Transverse colon (tissue), 4 donors: ENCODE measurements at regions of chr6 and their contacts with region 1.

Region 1: DNA sequence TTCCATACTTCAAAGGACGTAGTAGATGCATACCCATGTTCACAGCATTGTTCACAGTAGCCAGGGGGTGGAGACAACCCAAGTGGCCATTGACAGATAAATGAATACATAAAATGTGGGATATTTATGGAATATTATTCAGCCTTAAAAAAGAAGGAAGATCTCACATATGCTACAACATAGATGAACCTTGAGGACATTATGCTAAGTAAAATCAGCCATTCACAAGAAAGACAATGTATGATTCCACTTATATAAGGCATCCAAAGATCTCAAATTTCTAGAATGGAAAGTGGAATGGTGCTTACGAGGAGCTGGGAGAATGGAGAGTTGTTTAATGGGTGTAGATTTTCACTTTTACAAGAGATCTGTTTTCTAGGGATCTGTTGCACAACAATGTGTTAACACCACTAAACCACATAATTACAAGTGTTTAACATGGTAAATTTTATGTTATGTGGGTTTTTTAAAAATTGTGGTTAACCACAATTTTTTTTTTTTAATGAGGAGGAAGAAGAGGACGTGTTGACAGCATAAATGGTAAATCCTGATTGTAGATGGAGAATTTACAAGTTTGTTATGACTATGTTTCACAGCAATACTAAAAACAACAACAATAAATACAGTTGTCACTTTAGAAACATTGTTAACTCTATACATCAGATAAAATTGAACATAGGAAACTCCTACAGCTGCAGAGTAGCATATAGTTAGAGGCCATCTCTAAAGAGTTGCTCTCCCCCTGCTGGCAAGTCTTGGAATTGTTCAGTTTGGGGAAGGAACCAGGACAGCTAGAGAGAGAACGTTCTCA is 41.6 kb downstream of the CCN2 start:
- DNase-seq: peak; percentile 89
- H3K4me3 ChIP-seq: no peak overlapping the region
- H3K27ac ChIP-seq: no peak overlapping the region
- H3K4me1 ChIP-seq: peaks cover 0 to 26% (median 4%) of the 10 kb centered on the region in 4 donors
- H3K27me3 ChIP-seq: peaks cover 9% of the 10 kb centered on the region
- CTCF ChIP-seq: peak; percentile 82 to 94 (median 89)
- EP300 ChIP-seq: no peak
- POLR2A ChIP-seq: no peak

Region 2: GRCh38 chr6:131683479-131683878 is 226.1 kb before region 1 on chr6:
- in situ Hi-C with region 1: loop called in 1 of 4 experiments (anchors 10 kb)
- intact Hi-C with region 1: no loop called
- DNase-seq: no peak
- H3K4me3 ChIP-seq: no peak overlapping the region
- H3K27ac ChIP-seq: no peak overlapping the region
- H3K4me1 ChIP-seq: no peaks in the 10 kb centered on the region
- H3K27me3 ChIP-seq: no peaks in the 10 kb centered on the region
- CTCF ChIP-seq: no peak
- EP300 ChIP-seq: no peak
- POLR2A ChIP-seq: no peak

Region 3: GRCh38 chr6:131694831-131695426 is 214.7 kb before region 1 on chr6:
- in situ Hi-C with region 1: loop called in 2 of 4 experiments (anchors 10 kb)
- intact Hi-C with region 1: no loop called
- DNase-seq: peak; percentile 33
- H3K4me3 ChIP-seq: no peak overlapping the region
- H3K27ac ChIP-seq: no peak overlapping the region
- H3K4me1 ChIP-seq: no peaks in the 10 kb centered on the region
- H3K27me3 ChIP-seq: no peaks in the 10 kb centered on the region
- CTCF ChIP-seq: peak; percentile 55 to 66 (median 66)
- EP300 ChIP-seq: no peak
- POLR2A ChIP-seq: no peak

Region 4: DNA sequence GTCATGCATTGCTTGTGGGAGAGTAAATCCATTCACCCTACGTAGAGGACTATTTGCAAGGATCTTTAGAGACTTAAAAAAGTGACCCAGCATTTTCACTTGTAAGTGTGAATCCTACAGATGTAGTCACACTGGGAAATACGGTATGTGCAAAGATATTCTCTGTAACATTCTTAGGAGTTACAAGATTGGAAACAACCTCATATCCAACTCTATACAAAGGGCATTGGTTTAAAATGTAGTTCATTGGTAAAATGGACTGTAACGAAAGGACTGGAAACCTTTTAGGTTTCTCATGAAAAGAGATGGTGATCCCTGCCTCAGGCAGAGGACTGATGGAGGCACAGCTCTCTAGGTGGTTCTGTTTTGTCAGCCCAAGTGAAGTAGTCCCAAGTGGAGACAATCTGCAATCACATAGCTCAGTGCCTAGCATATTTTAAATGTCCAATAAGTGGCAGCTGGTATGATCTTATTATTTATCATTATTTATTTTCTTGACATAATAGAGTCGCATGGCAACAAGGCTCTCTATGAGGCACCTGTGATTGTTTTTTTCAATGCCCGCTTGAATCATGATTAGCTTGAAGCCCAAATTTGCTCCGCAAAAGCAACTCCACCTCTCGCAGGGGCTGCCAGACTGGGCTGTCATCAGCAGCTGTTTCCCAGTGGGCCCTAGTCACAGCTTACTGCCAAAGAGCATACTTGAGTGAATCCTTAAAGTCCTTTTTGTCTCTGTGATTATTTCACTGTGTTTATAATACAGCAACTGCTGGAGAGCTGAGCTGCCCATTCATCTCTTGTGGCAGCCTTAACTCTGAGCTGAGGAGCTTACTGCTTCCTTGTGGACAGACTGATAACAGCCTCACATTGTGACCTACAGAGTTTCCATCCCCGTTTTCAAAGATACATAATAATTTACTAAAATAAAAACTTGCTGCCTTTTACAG is 121.6 kb before region 1 on chr6:
- in situ Hi-C with region 1: loop called in 2 of 4 experiments (anchors 10 kb)
- intact Hi-C with region 1: no loop called
- DNase-seq: no peak
- H3K4me3 ChIP-seq: no peak overlapping the region
- H3K27ac ChIP-seq: no peak overlapping the region
- H3K4me1 ChIP-seq: no peaks in the 10 kb centered on the region
- H3K27me3 ChIP-seq: no peaks in the 10 kb centered on the region
- CTCF ChIP-seq: peak in 1 of 5 experiments; percentile 4
- EP300 ChIP-seq: no peak
- POLR2A ChIP-seq: no peak

Region 5: DNA sequence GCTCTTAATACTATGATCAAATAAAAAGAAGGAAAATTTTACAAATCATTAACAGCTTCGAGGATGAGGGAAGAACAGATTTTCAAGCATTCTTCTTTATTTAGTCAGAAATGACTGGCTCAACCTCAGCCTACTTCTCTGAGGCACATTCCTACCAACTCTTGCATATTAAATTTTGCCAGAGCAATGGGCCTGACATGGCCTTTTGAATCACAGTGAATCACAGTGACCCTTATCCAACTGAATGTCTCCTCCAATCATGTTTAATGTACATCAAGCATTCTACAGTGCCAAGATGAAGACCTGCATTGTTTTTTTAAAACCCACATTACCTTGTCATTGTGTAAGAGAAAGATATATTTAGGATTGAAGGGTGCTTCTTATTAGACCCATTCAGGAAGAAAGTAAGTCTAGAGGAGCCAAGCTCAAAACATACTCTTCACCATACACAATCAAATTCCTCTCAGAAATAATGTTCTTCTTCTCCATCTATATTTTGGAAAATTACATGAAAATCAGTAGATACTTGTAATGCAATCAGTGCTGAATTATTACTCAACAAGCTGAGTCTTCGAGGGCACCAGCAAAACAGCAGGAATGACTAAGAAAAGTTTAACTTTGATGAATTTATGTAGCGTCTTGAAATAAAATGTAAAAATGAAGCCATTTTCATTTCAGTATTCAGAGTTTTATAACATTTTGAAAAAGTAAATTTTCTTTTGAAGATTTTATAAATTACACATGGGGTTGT is 535.8 kb after region 1 on chr6:
- in situ Hi-C with region 1: no loop called
- intact Hi-C with region 1: no loop called
- DNase-seq: no peak
- H3K4me3 ChIP-seq: no peak overlapping the region
- H3K27ac ChIP-seq: no peak overlapping the region
- H3K4me1 ChIP-seq: no peaks in the 10 kb centered on the region
- H3K27me3 ChIP-seq: no peaks in the 10 kb centered on the region
- CTCF ChIP-seq: no peak
- EP300 ChIP-seq: no peak
- POLR2A ChIP-seq: no peak

Region 6: GRCh38 chr6:132483779-132484679 is 574.4 kb after region 1 on chr6:
- in situ Hi-C with region 1: loop called in 1 of 4 experiments (anchors 25 kb)
- intact Hi-C with region 1: no loop called
- DNase-seq: peak; percentile 13
- H3K4me3 ChIP-seq: no peak overlapping the region
- H3K27ac ChIP-seq: no peak overlapping the region
- H3K4me1 ChIP-seq: peaks cover 0 to 20% (median 6%) of the 10 kb centered on the region in 4 donors
- H3K27me3 ChIP-seq: no peaks in the 10 kb centered on the region
- CTCF ChIP-seq: peak; percentile 64 to 79 (median 69)
- EP300 ChIP-seq: no peak
- POLR2A ChIP-seq: no peak